T-cell (primary cell): ENCODE measurements at regions of chr14 and their contacts with region 1.

Region 1: GRCh38 chr14:91614187-91614586 is 104.1 kb upstream of the PPP4R3A start:
- DNase-seq: no peak
- ATAC-seq: no peak
- H3K4me3 ChIP-seq: no peak overlapping the region
- H3K4me3 Mint-ChIP-seq: no peak overlapping the region
- H3K27ac ChIP-seq: no peak overlapping the region
- H3K27ac Mint-ChIP-seq: no peak overlapping the region
- H3K4me1 ChIP-seq: no peaks in the 10 kb centered on the region
- H3K4me1 Mint-ChIP-seq: no peaks in the 10 kb centered on the region
- H3K27me3 ChIP-seq: no peaks in the 10 kb centered on the region
- H3K27me3 Mint-ChIP-seq: no peaks in the 10 kb centered on the region

Region 2: GRCh38 chr14:89681086-89682018 is 1932.8 kb before region 1 on chr14:
- CTCF ChIA-PET with region 1: no interaction called
- POLR2A ChIA-PET with region 1: no interaction called
- DNase-seq: peak in 19 of 35 experiments; percentile 5 to 55 (median 14)
- ATAC-seq: peak; percentile 67 to 84 (median 71)
- H3K4me3 ChIP-seq: peak overlapping the region; percentile 25 to 54
- H3K4me3 Mint-ChIP-seq: peak overlapping the region; percentile 58 to 83 (median 67)
- H3K27ac ChIP-seq: peak overlapping the region; percentile 63
- H3K27ac Mint-ChIP-seq: peak overlapping the region; percentile 93 to 94
- H3K4me1 ChIP-seq: peaks cover 27 to 28% of the 10 kb centered on the region in 2 experiments
- H3K4me1 Mint-ChIP-seq: peaks cover 36 to 40% (median 39%) of the 10 kb centered on the region in 3 donors
- H3K27me3 ChIP-seq: no peaks in the 10 kb centered on the region
- H3K27me3 Mint-ChIP-seq: no peaks in the 10 kb centered on the region

Region 3: GRCh38 chr14:91774140-91775096 is 160.2 kb after region 1 on chr14:
- CTCF ChIA-PET with region 1: no interaction called
- POLR2A ChIA-PET with region 1: no interaction called
- DNase-seq: no peak
- ATAC-seq: peak in 1 of 4 experiments; percentile 12
- H3K4me3 ChIP-seq: no peak overlapping the region
- H3K4me3 Mint-ChIP-seq: no peak overlapping the region
- H3K27ac ChIP-seq: no peak overlapping the region
- H3K27ac Mint-ChIP-seq: peak overlapping the region; percentile 17 to 59
- H3K4me1 ChIP-seq: no peaks in the 10 kb centered on the region
- H3K4me1 Mint-ChIP-seq: peaks cover 17 to 27% (median 26%) of the 10 kb centered on the region in 3 donors
- H3K27me3 ChIP-seq: no peaks in the 10 kb centered on the region
- H3K27me3 Mint-ChIP-seq: no peaks in the 10 kb centered on the region

Region 4: DNA sequence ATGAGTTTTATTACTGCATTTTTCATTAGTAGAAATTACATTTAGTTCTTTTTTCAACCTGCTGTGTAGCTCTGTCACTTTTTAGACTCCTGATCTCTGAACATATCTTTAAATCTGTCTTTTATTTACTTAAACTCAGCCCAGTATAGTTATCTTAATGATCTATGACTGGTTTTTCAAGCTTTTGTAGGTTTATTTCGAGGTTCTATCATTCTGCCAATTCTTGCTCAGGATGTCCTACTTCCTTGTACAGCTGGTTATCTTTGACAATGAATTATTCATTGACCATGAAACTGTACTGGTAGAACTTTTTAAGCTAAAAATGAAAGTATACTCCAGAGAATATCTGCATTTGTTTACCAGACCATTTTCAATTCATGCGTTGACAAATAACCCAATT is 215.3 kb after region 1 on chr14:
- CTCF ChIA-PET with region 1: no interaction called
- POLR2A ChIA-PET with region 1: interaction called in 1 of 2 experiments, 10 read pairs
- DNase-seq: no peak
- ATAC-seq: peak in 1 of 4 experiments; percentile 17
- H3K4me3 ChIP-seq: no peak overlapping the region
- H3K4me3 Mint-ChIP-seq: no peak overlapping the region
- H3K27ac ChIP-seq: no peak overlapping the region
- H3K27ac Mint-ChIP-seq: peak overlapping the region; percentile 25 to 54
- H3K4me1 ChIP-seq: peaks cover 10 to 11% of the 10 kb centered on the region in 2 experiments
- H3K4me1 Mint-ChIP-seq: peaks cover 68 to 76% (median 72%) of the 10 kb centered on the region in 3 donors
- H3K27me3 ChIP-seq: no peaks in the 10 kb centered on the region
- H3K27me3 Mint-ChIP-seq: no peaks in the 10 kb centered on the region